ENCODE measurements at regions of chr5 and their contacts with region 1.

Region 1: DNA sequence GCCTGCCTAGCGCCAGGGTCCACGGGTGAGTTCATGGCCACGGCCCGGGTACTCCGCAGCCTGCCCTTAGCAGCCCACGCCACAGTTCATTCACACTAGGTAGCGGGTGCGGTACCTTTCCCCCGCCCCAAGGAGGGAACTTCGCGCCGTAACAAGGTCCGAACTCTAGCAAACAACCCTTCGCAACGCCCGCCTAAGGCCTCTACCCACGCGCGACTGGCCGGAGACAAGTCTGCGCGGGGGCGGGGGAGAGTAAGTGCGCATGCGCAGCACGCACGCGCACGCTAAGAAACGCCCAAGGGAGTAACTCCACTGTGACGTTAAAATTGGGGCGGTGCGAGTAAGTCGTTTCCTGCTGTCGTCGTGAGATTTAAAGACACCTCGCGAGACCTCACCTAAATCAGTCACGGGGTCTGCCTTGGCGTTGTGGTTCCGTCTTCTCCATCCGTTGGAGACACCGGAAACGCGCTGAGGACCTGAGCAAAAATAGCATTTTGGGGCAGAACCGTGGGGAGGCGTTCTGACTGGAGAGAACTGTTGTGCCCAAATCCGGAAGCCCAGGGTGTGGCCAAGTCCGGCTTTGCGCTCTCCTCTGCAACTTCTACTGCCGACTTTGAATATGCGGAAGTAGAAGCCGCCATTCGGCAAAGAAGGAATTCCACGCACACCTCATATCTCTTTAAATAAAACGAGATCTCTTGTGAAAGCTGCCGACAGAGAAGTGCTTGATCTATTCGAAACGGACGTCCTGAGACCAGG is at the start of gene RAPGEF6:
- DNase-seq: peak; percentile 85
- H3K4me3 ChIP-seq: peak within 1 kb of the TSS; percentile 84 to 98
- H3K27ac ChIP-seq: peak within 1 kb of the TSS; percentile 99
- H3K4me1 ChIP-seq: peaks cover 3 to 12% of the 10 kb centered on the region in 2 experiments; a peak in 3 of 4 replicates
- H3K27me3 ChIP-seq: no peaks in the 10 kb centered on the region
- CTCF ChIP-seq: 0 out of 2 replicates have a peak, but pooled peaks have one; percentile 13
- EP300 ChIP-seq: no peak
- RAD21 ChIP-seq: 0 out of 2 replicates have a peak, but pooled peaks have one; percentile 13
- polyA plus RNA-seq, gene RAPGEF6: 2.9 and 4.7 TPM in 2 replicates

Region 2: GRCh38 chr5:131796793-131797693 is 161.9 kb after region 1 on chr5 and contains the start of gene FNIP1:
- CTCF ChIA-PET with region 1: no interaction called
- POLR2A ChIA-PET with region 1: interaction called, 14 read pairs
- DNase-seq: peak; percentile 100
- H3K4me3 ChIP-seq: peak within 1 kb of the TSS; percentile 81 to 94
- H3K27ac ChIP-seq: peak within 1 kb of the TSS; percentile 90
- H3K4me1 ChIP-seq: peaks cover 0 to 12% of the 10 kb centered on the region in 2 experiments; a peak in 2 of 4 replicates
- H3K27me3 ChIP-seq: no peaks in the 10 kb centered on the region
- CTCF ChIP-seq: peak; percentile 13; the same call in 1 of the 2 replicates
- EP300 ChIP-seq: peak in 1 of 2 experiments; percentile 40; a peak in 1 of 4 replicates
- RAD21 ChIP-seq: no peak
- polyA plus RNA-seq, gene FNIP1: 2.4 and 3.7 TPM in 2 replicates

Measured in SK-N-SH (cell line).